Activated T-helper 1 cell treated with anti-CD3 and anti-CD28 coated beads, Interleukin-12 subunit alpha, Interleukin-12 subunit beta, Interleukin-2, Interleukin-4 antibody, amounts not matched to agents 30 ng/mL and 10 ng/mL and 1 ng/mL, durations not matched to agents 14 hours and 24 hours and 36 hours (primary cell): ENCODE measurements at regions of chr4 and their contacts with region 1.

Region 1: GRCh38 chr4:153432968-153433753 is 33.0 kb upstream of the TMEM131L start:
- DNase-seq: peak; percentile 68
- H3K4me3 Mint-ChIP-seq: peak overlapping the region; percentile 76
- H3K27ac Mint-ChIP-seq: peak overlapping the region; percentile 87
- H3K4me1 Mint-ChIP-seq: peaks cover 46% of the 10 kb centered on the region
- H3K27me3 Mint-ChIP-seq: peaks cover 4% of the 10 kb centered on the region

Region 2: DNA sequence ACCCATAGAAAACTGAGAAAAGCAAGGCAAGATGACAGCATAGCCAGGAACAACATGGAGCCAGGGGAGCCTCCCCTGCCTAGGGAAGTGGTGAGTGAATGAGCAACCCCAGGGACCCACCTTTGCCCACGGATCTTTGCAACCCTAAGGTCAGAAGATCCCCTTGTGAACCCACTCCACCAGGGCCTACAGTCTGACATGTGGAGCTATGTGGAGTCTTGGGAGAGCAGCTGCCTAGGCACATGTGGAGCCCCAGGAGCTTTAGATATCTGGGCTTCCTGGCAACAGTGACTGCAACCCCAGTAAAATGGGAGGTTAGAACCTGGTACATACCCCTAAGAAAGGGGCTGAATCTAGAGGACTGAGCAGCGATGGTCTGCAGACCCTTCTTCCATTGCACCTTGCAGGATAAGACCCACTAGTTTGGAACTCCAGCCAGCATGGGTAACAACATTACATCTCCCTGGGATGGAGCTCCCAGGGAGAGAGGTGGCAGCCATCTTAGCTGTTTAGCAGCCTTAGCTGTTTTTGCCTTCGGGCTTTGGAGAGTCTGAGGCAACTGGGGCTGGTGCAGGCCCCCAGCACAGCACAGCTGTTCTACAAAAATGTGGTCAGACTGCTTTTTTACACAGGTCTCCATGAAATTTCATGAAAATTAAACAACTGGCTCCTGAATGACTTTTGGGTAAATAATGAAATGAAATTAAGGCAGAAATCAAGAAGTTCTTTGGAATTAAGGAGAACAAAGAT is 333.6 kb before region 1 on chr4:
- intact Hi-C with region 1: no loop called
- DNase-seq: no peak
- H3K4me3 Mint-ChIP-seq: no peak overlapping the region
- H3K27ac Mint-ChIP-seq: no peak overlapping the region
- H3K4me1 Mint-ChIP-seq: no peaks in the 10 kb centered on the region
- H3K27me3 Mint-ChIP-seq: peaks cover 33% of the 10 kb centered on the region

Region 3: DNA sequence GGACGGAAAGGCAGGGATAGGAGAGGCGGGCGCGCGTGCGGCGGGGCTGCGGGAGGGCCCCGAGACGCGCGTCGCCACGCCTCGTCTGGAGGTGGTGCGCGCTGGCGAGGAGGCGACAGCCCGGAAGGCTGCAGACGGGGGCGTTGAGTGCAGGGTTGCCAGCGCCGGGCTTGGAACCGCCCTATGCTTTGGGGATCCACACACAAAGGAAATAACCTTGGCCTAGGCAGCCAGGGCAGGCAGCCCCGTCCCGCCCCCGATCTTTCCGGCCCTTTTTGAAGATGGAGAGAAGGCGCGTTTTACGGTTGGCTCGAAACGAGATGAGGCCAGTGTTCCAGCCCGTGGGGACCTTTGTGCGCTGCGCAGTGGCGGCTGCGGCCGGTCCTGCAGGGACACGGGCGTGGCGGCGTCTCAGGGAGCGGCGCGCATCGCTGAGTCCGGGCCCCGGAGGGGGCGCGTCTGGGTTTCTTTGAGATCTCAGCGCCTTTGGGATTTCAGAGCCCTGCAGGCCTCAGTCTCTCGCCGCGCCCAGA is 279.8 kb before region 1 on chr4:
- intact Hi-C with region 1: loop called (anchors 5 kb)
- DNase-seq: peak; percentile 70
- H3K4me3 Mint-ChIP-seq: peak overlapping the region; percentile 82
- H3K27ac Mint-ChIP-seq: peak overlapping the region; percentile 67
- H3K4me1 Mint-ChIP-seq: peaks cover 59% of the 10 kb centered on the region
- H3K27me3 Mint-ChIP-seq: peaks cover 42% of the 10 kb centered on the region

Region 4: DNA sequence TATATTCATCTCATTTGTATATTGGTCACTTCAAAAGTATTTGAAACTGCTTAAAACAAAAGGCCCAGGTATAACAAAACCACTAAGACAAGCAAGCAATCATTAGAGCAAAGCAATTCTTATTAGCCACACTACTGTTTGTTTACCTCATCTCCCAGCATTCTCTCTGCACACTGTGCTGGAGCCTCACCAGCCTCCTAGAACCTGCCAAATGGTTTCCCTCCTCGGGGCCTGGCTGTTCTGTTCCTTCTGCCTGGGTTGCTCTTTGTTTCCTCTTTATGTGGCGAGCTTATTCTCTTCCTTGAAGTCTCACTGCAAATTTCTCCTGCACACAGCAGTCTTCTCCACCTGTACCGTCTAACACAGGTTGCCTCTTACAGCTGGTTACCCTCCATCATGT is 156.2 kb before region 1 on chr4:
- intact Hi-C with region 1: no loop called
- DNase-seq: no peak
- H3K4me3 Mint-ChIP-seq: no peak overlapping the region
- H3K27ac Mint-ChIP-seq: no peak overlapping the region
- H3K4me1 Mint-ChIP-seq: no peaks in the 10 kb centered on the region
- H3K27me3 Mint-ChIP-seq: no peaks in the 10 kb centered on the region

Region 5: GRCh38 chr4:153497988-153498967 is 65.1 kb after region 1 on chr4:
- intact Hi-C with region 1: loop called (anchors 2 kb)
- DNase-seq: no peak
- H3K4me3 Mint-ChIP-seq: peak overlapping the region; percentile 79
- H3K27ac Mint-ChIP-seq: peak overlapping the region; percentile 90
- H3K4me1 Mint-ChIP-seq: peaks cover 89% of the 10 kb centered on the region
- H3K27me3 Mint-ChIP-seq: no peaks in the 10 kb centered on the region

Region 6: GRCh38 chr4:153616006-153616555 is 182.9 kb after region 1 on chr4:
- intact Hi-C with region 1: loop called (anchors 2 kb)
- DNase-seq: peak; percentile 16
- H3K4me3 Mint-ChIP-seq: no peak overlapping the region
- H3K27ac Mint-ChIP-seq: peak overlapping the region; percentile 29
- H3K4me1 Mint-ChIP-seq: peaks cover 26% of the 10 kb centered on the region
- H3K27me3 Mint-ChIP-seq: no peaks in the 10 kb centered on the region

Region 7: GRCh38 chr4:153750197-153750817 is 317.1 kb after region 1 on chr4:
- intact Hi-C with region 1: loop called (anchors 2 kb)
- DNase-seq: peak; percentile 52
- H3K4me3 Mint-ChIP-seq: no peak overlapping the region
- H3K27ac Mint-ChIP-seq: no peak overlapping the region
- H3K4me1 Mint-ChIP-seq: no peaks in the 10 kb centered on the region
- H3K27me3 Mint-ChIP-seq: peaks cover 31% of the 10 kb centered on the region